ENCODE measurements at regions of chr16 and their contacts with region 1.

Region 1: GRCh38 chr16:66830422-66831404 is at the start of gene NAE1:
- DNase-seq: peak; percentile 93
- ATAC-seq: peak; percentile 96
- H3K4me3 Mint-ChIP-seq: peak within 1 kb of the TSS; percentile 73
- H3K27ac Mint-ChIP-seq: peak within 1 kb of the TSS; percentile 67
- H3K4me1 Mint-ChIP-seq: peaks cover 32% of the 10 kb centered on the region
- H3K27me3 Mint-ChIP-seq: peaks cover 2% of the 10 kb centered on the region
- total RNA-seq, gene NAE1: 102 to 125 TPM

Region 2: DNA sequence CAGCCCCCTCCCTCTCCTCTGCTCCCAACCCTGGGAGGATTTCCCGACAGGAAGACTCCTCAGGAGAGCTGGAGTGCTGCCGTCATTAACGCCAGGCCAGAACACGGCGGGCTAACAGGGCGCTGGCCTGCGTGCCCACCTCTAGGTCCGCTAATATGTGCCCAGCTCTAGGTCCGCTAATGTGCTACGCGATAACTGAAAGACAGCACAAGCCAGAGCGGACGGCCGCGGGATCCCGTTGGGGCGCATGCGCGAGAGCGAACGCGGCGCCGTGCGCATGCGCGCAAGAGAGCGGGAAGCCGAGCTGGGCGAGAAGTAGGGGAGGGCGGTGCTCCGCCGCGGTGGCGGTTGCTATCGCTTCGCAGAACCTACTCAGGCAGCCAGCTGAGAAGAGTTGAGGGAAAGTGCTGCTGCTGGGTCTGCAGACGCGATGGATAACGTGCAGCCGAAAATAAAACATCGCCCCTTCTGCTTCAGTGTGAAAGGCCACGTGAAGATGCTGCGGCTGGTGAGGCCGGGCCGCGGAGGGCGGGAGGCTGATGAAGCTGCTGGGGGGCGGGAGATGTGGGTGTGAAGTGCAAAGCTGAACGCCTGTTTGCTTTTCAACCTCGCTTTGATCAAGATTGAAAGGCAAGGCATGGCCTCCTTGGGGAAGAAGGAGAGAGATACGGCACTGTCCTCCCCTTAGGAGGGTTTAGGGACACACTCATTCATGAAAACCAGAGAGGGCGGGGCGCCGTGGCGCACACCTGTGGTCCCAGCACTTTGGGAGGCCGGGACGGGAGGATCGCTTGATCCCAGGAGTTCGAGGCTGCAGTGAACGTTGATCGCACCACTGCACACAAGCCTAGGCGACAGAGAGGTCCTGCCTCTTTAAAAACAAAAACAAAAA is 278.2 kb before region 1 on chr16 and contains the start of gene CKLF:
- CTCF ChIA-PET with region 1: no interaction called
- POLR2A ChIA-PET with region 1: no interaction called
- intact Hi-C with region 1: loop called in 1 of 2 experiments (anchors 2 kb)
- DNase-seq: peak; percentile 94
- ATAC-seq: peak; percentile 73
- H3K4me3 Mint-ChIP-seq: peak within 1 kb of the TSS; percentile 97
- H3K27ac Mint-ChIP-seq: peak within 1 kb of the TSS; percentile 94
- H3K4me1 Mint-ChIP-seq: peaks cover 76% of the 10 kb centered on the region
- H3K27me3 Mint-ChIP-seq: no peaks in the 10 kb centered on the region
- total RNA-seq, gene CKLF: 93.5 to 122 TPM

Region 3: DNA sequence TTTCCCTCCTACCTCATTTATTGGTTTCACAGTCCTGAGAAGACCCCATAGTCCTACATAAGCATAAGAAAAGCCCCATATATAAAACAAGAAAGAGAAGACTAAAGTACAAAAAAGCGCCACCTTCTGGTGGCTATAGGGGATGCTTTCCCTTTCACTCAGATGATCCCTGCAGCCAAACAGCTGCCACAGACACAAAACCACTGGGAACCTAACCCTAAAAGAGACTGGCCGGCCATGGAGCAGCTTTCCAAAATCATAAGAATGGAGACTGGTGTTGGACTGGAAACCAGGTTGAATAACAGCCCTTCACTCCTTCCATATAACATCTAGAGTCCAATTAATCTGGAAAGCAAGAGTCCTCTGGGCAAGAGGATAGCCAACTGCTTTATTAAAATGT is 90.7 kb before region 1 on chr16:
- CTCF ChIA-PET with region 1: interaction called, 10 read pairs
- POLR2A ChIA-PET with region 1: no interaction called
- intact Hi-C with region 1: no loop called
- DNase-seq: peak; percentile 48
- ATAC-seq: peak; percentile 72
- H3K4me3 Mint-ChIP-seq: no peak overlapping the region
- H3K27ac Mint-ChIP-seq: no peak overlapping the region
- H3K4me1 Mint-ChIP-seq: peaks cover 16% of the 10 kb centered on the region
- H3K27me3 Mint-ChIP-seq: no peaks in the 10 kb centered on the region

Region 4: GRCh38 chr16:66811043-66811442 is 19.7 kb before region 1 on chr16:
- CTCF ChIA-PET with region 1: interaction called, 11 read pairs
- POLR2A ChIA-PET with region 1: no interaction called
- intact Hi-C with region 1: no loop called
- DNase-seq: no peak
- ATAC-seq: no peak
- H3K4me3 Mint-ChIP-seq: no peak overlapping the region
- H3K27ac Mint-ChIP-seq: no peak overlapping the region
- H3K4me1 Mint-ChIP-seq: no peaks in the 10 kb centered on the region
- H3K27me3 Mint-ChIP-seq: no peaks in the 10 kb centered on the region

Region 5: DNA sequence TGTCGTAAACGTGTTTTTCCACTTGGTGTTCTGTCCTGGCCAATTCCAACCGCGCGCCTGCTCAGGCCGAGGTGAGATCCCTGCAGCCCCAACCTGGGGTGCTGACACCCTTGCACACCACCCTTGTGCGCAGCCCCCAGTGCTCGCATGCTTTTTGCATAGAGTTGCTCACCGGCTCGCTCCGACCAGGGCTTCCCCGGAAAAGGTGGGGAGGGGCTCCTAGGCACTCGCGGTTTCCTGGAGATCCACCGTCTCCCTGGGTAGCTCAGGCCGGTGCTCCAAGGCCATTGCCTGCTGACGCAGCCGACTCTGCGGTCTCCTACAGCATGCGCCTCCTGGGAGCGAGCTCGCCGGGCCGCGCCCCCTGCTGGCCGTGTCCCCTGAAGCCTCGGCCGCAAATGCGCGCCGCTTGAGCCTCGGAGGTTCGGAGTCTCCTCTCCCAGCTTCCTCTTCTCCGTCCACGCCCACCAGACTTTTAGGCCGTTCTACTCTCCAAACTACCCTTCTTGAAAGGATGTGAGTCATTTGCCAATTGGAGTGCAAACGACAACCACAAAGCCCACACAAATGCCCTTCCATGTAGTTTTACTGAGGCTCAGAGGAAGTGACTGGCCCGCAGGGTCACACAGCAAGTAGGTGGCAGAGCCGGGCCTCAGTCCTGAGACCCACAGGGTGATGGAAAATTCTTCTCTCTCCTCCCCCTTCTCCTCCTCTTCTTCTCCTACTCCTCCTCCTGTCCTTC is 42.4 kb after region 1 on chr16:
- CTCF ChIA-PET with region 1: interaction called, 96 read pairs
- POLR2A ChIA-PET with region 1: interaction called, 9 read pairs
- intact Hi-C with region 1: loop called (anchors 1 to 2 kb)
- DNase-seq: peak; percentile 95
- ATAC-seq: peak; percentile 77
- H3K4me3 Mint-ChIP-seq: peak overlapping the region; percentile 65
- H3K27ac Mint-ChIP-seq: peak overlapping the region; percentile 72
- H3K4me1 Mint-ChIP-seq: peaks cover 48% of the 10 kb centered on the region
- H3K27me3 Mint-ChIP-seq: no peaks in the 10 kb centered on the region

Region 6: DNA sequence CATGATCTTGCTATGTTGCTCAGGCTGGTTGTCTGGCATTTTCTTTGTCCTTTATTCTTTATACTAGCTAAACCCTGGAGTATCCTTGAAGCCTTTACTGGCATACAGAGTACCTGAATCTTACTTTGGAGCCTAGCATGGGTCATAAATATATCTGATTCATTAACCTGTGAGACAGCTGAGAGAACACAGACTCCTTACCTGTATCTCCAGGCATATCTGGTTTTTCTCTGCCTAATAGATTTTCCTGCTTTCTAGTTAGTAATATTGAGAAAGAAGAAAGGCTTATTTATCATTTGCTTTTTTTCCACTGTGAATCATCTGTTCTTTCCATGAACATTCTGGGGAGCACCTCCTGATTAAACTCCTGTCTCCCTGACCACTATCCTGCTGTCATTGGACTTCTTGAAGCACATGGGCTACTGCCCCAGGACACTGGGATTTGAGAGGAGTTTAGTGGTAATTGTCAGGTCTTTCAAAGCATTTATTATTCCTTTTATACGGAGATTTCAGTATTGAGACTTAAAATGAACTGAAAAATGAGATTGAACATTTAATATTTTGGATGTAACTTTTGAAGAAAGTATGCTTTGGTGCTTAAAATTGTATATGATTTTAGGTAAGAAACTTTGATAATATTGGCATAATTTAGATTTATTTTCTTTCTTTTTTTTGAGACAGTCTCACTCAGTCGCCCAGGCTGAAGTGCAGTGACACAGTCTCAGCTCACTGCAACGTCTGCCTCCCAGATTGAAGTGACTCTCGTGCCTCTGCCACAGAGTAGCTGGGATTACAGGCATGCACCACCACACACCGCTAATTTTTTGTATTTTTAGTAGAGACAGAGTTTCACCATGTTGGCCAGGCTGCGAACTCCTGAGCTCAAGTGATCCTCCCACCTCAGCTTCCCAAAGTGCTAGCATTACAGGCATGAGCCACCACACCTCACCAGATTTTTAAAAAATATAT is 58.2 kb after region 1 on chr16:
- CTCF ChIA-PET with region 1: interaction called, 15 read pairs
- POLR2A ChIA-PET with region 1: no interaction called
- intact Hi-C with region 1: no loop called
- DNase-seq: no peak
- ATAC-seq: no peak
- H3K4me3 Mint-ChIP-seq: no peak overlapping the region
- H3K27ac Mint-ChIP-seq: no peak overlapping the region
- H3K4me1 Mint-ChIP-seq: peaks cover 33% of the 10 kb centered on the region
- H3K27me3 Mint-ChIP-seq: no peaks in the 10 kb centered on the region

Region 7: DNA sequence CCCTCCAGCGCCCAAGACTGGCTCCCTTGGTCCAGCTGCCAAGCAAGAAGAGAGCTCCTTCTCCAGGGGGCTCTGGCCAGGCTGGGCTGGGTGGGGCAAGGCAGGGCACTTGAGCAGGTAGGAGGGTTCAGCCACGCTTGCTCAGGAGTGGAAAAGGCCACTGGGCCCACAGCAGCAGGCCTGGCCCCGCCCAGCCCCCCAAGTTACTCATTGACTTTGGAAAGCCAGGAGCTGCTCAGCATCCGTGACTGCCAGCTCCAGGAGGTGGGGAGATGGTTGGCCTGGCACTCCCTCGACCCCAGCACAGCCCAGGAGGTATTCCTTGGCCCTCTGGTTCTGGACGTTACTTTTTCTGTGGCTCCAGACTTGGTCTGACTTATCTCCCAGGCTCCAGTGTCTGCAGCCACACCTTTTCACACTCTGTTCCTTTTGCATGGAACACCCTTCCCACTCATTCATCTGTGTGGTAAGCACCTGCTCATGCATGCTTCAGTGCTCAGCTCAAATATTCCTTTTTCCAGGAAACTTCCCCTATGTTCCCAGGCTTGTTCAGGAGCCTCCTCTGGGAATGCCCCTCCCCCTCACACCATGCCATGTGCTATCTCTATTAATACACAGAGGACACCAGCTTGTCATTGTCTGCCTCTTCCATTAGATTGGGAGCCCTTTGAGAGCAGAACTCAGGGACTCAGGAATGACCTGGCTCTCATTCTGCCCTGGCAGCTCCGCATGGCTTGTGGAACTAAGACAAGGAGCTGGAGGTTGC is 88.3 kb after region 1 on chr16 and contains the start of gene CDH16:
- CTCF ChIA-PET with region 1: no interaction called
- POLR2A ChIA-PET with region 1: no interaction called
- intact Hi-C with region 1: no loop called
- DNase-seq: no peak
- ATAC-seq: no peak
- H3K4me3 Mint-ChIP-seq: no peak within 1 kb of the TSS
- H3K27ac Mint-ChIP-seq: no peak within 1 kb of the TSS
- H3K4me1 Mint-ChIP-seq: no peaks in the 10 kb centered on the region
- H3K27me3 Mint-ChIP-seq: peaks cover 19% of the 10 kb centered on the region
- total RNA-seq, gene CDH16: not detected

Region 8: DNA sequence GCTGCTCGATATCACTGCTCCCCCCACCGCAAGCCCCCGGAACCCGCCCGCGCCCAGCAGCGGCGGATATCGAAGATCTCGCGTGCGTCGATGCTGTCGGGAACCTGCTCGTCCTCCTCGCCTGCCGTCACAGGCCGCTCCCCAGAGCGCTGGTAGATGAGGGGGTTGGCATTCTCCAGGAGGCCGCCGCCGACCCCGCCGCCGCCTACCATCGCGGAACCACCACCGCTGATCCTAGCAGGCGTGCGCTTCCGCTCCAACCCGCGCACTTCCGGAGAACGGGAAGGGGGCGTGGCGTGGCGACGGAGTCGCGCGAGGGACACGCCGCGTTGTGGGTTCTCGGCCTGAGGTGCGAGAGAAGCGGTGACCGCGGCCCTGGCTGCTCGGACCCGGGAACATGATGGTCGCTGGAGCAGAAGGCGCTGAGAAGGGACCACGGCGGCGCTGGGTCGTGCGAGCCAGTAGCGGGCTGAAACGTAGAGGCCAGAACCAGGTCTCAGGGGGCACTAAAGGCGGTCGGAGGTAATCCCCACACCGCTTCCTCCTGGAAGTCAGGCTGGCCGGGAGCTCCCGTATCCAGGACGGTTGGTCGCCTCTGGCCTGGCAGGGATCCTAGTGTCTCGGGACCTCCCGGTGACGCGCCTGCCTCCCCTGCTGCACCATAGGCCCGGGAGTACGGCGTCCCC is 103.6 kb after region 1 on chr16 and contains the start of gene CIAO2B:
- CTCF ChIA-PET with region 1: interaction called, 5 read pairs
- POLR2A ChIA-PET with region 1: no interaction called
- intact Hi-C with region 1: loop called in 1 of 2 experiments (anchors 2 kb)
- DNase-seq: peak; percentile 93
- ATAC-seq: peak; percentile 84
- H3K4me3 Mint-ChIP-seq: peak within 1 kb of the TSS; percentile 99
- H3K27ac Mint-ChIP-seq: peak within 1 kb of the TSS; percentile 96
- H3K4me1 Mint-ChIP-seq: peaks cover 57% of the 10 kb centered on the region
- H3K27me3 Mint-ChIP-seq: no peaks in the 10 kb centered on the region
- total RNA-seq, gene CIAO2B: 171 to 186 TPM